ENCODE measurements at regions of chrX and their contacts with region 1.

Region 1: GRCh38 chrX:43836435-43837184 is 45.6 kb downstream of the MAOB start:
- DNase-seq: no peak
- H3K4me3 ChIP-seq: no peak overlapping the region
- H3K27ac ChIP-seq: no peak overlapping the region
- H3K4me1 ChIP-seq: no peaks in the 10 kb centered on the region
- H3K27me3 ChIP-seq: no peaks in the 10 kb centered on the region
- CTCF ChIP-seq: peak; percentile 67

Region 2: GRCh38 chrX:43703211-43703791 is 133.3 kb before region 1 on chrX:
- intact Hi-C with region 1: no loop called
- DNase-seq: peak; percentile 49
- H3K4me3 ChIP-seq: no peak overlapping the region
- H3K27ac ChIP-seq: no peak overlapping the region
- H3K4me1 ChIP-seq: no peaks in the 10 kb centered on the region
- H3K27me3 ChIP-seq: no peaks in the 10 kb centered on the region
- CTCF ChIP-seq: no peak

Region 3: DNA sequence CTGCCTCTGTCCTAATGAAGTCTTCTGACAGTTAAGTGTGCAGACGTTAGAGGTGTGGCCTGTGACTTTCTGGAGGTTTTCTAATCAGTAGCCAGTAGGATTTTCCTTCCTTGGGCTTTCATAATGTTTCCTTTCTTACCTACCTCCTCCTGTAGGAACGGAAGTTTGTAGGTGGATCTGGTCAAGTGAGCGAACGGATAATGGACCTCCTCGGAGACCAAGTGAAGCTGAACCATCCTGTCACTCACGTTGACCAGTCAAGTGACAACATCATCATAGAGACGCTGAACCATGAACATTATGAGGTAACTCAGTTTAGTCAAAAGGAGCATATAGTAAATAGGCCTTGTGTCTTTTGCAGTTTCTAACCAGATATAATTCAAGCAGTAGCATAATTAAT is 105.5 kb before region 1 on chrX:
- intact Hi-C with region 1: no loop called
- DNase-seq: no peak
- H3K4me3 ChIP-seq: no peak overlapping the region
- H3K27ac ChIP-seq: no peak overlapping the region
- H3K4me1 ChIP-seq: no peaks in the 10 kb centered on the region
- H3K27me3 ChIP-seq: no peaks in the 10 kb centered on the region
- CTCF ChIP-seq: no peak

Region 4: DNA sequence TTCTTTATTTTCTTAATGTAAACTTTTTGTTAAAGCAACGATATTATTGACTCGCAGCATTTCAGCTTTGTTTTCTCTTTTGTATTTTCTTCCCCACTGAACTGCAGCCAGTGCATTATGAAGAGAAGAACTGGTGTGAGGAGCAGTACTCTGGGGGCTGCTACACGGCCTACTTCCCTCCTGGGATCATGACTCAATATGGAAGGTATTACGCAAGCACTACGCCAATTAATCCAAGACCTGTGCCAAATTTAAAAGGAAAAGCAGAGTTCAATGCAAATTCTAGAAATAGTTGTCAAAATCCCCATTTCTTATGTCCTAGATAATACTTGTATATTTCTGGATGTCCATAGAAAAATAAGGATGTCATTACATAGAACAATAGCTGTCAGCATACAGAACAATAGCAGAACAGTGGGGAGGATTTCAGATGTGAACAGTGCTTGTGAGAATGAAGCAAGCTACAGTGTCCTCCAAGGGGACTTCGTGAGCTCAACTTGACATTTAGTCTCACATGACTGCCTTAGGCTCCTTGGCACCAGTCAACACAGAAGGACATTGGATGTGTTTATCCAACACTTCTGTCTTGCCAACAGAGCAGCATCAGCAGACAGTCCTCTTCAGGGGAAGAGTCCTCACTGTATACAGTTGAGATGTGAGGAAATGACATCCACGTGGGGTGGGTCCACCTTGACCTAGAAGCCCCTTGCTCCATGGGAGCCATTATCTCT is 94.6 kb before region 1 on chrX:
- intact Hi-C with region 1: no loop called
- DNase-seq: no peak
- H3K4me3 ChIP-seq: no peak overlapping the region
- H3K27ac ChIP-seq: no peak overlapping the region
- H3K4me1 ChIP-seq: no peaks in the 10 kb centered on the region
- H3K27me3 ChIP-seq: no peaks in the 10 kb centered on the region
- CTCF ChIP-seq: no peak

Region 5: DNA sequence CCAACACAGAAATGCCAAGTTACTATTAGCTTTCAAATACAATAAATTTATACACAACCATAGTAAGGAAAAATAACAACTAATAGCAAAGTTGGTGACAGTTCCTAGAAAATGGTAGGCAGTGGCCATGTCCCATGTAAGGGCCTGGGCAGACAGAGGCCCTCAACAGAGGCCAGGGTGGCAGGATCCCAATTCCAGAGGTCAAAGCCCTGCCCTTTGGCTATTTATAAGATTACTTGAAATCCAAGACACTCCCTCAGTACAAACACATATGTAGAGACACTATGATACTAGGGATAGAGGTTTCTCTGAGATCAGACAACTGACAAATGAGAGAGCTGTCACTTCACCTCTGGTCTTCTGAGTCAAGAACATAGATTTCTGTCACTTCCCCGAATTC is 61.8 kb after region 1 on chrX:
- intact Hi-C with region 1: no loop called
- DNase-seq: no peak
- H3K4me3 ChIP-seq: no peak overlapping the region
- H3K27ac ChIP-seq: no peak overlapping the region
- H3K4me1 ChIP-seq: no peaks in the 10 kb centered on the region
- H3K27me3 ChIP-seq: peaks cover 5% of the 10 kb centered on the region
- CTCF ChIP-seq: no peak

Region 6: DNA sequence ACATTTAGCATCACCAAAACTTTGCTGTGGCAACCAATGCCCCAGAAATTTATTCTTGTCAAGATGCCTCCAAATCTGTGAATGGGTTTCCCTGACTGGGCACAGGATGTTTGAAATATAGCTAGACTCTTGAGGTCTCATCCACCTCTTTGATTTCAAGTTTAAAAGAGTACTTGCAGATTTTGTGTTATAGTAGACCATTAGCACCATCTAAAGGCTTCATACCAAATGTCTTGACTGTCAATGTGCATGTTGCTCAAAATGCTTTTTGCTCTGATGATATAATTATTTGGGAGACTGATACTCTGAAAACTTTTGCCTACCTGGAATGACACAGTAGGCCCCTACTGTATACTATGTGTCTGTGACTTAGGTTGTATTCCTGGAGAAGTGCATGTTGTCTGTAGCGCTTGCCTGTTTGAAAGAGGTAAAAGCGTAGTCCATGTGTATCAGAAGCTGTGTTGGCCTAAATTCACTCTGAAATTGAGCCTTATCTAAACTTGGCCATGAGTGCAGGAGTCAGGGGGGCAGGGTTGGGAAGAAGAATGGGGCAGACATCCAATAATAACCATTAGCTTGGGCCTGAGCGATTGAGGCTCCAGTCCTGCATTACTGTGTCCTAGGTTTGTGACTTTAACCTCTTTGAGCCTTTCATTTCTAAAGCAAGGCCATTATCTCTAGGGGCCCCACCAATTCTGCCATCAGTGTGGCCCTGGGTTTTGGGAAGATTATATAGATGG is 102.7 kb after region 1 on chrX:
- intact Hi-C with region 1: loop called (anchors 5 kb)
- DNase-seq: no peak
- H3K4me3 ChIP-seq: no peak overlapping the region
- H3K27ac ChIP-seq: no peak overlapping the region
- H3K4me1 ChIP-seq: no peaks in the 10 kb centered on the region
- H3K27me3 ChIP-seq: no peaks in the 10 kb centered on the region
- CTCF ChIP-seq: no peak

Measured in colonic mucosa (tissue), 4 donors.